ENCODE measurements at regions of chr7 and their contacts with region 1.

Region 1: DNA sequence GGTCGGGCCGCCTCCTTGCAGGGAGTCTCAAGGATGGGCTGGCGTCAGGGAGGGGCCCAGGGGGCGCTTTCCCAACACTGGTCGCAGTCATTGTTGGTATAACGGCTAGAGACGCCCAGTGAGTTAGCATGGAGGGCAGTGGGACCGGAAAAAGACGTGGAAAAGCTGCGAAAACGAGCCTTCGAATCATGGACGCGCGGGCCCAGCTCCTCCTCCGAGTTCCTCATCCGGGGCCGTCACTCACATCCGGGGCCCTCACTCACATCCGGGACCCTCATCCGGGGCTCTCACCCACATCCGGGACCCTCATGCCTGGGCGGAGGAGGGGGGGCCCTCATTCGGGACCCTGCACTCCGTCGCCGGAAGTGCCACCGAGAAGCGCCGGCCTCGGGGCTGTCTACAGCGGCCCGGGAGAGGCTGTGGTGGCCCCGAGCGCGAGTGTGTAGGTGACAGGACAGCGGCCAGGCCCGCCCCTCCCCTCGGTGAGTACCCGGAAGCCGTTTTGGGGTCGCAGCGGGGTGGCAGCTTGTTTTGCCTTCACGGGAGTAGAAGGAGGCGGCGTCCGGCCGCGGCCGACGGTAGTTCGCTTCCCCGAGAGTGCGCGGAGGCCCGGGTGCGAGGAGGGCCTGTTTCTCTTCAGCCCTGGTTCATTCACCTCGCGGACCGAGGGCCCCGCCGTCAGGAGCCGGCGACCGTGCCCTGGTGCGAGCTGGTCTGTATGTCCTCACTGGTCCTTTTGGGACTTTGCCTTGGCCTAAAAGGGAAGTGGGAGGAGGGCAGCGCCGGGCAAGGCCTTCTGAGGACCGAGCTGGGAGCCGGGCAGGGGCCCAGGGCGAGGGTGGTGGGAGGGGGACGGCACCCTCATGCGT is at the start of gene ZNF655:
- DNase-seq: peak; percentile 97
- H3K4me3 Mint-ChIP-seq: peak within 1 kb of the TSS; percentile 100
- H3K27ac Mint-ChIP-seq: peak within 1 kb of the TSS; percentile 99
- H3K4me1 Mint-ChIP-seq: peaks cover 40% of the 10 kb centered on the region
- H3K27me3 Mint-ChIP-seq: no peaks in the 10 kb centered on the region
- total RNA-seq, gene ZNF655: 76.2 and 76.4 TPM in 2 replicates

Region 2: DNA sequence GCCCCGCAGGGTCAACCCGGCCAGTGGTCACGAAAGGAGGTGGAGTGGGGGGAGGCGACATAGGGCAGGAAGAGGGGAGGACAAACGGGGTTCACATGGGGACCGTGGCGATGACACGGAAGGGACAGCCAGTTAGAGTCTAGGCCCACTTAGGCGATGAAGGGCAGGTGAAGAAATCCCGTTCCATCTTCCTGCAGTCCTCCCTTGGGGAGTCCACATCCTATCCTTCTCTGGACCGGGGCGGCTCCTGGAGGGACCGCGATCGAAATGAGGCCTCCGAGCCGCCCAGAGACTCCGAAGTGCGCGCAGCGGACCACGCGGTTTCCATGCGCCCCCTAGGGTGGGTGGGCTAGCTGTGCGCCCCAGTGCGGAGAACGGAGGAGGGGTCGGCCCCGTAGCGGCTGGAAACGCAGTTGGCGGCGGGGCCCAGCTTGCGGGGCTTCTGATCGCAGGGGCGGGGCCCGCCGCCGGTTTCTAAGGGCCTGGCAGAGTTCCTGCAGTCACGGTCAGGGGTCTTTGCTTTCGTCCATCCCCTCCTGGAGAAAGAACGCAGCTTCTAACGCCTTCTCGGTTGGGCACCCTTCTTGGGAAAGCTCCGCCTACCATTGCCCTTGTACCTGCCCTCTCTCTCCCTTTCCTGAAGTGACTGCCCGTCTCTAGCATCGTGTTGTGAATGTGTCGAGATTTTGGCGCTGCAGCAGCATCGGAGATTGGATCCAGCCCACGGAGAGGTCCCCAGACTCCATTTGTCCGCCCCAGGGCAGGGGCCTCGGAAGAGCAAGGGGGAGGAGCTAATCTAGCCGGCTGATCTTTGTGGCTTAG is 21.6 kb after region 1 on chr7:
- intact Hi-C with region 1: loop called (anchors 2 kb)
- DNase-seq: peak; percentile 78
- H3K4me3 Mint-ChIP-seq: peak overlapping the region; percentile 89
- H3K27ac Mint-ChIP-seq: peak overlapping the region; percentile 49
- H3K4me1 Mint-ChIP-seq: peaks cover 18% of the 10 kb centered on the region
- H3K27me3 Mint-ChIP-seq: peaks cover 3% of the 10 kb centered on the region

Region 3: GRCh38 chr7:99623091-99623693 is 64.7 kb after region 1 on chr7:
- intact Hi-C with region 1: loop called (anchors 2 kb)
- DNase-seq: peak; percentile 73
- H3K4me3 Mint-ChIP-seq: peak overlapping the region; percentile 91
- H3K27ac Mint-ChIP-seq: peak overlapping the region; percentile 92
- H3K4me1 Mint-ChIP-seq: peaks cover 66% of the 10 kb centered on the region
- H3K27me3 Mint-ChIP-seq: no peaks in the 10 kb centered on the region